Activated CD8-positive, alpha-beta T cell treated with anti-CD3 and anti-CD28 coated beads, Interleukin-2, amount 10 ng/mL, durations not matched to agents 7 days and 5 days (primary cell): ENCODE measurements at regions of chr18 and their contacts with region 1.

Region 1: GRCh38 chr18:10787293-10787901 is 261.6 kb downstream of the NAPG start:
- DNase-seq: peak; percentile 94
- ATAC-seq: peak; percentile 97
- H3K4me3 Mint-ChIP-seq: no peak overlapping the region
- H3K27ac Mint-ChIP-seq: no peak overlapping the region
- H3K4me1 Mint-ChIP-seq: peaks cover 6% of the 10 kb centered on the region
- H3K27me3 Mint-ChIP-seq: peaks cover 39% of the 10 kb centered on the region

Region 2: GRCh38 chr18:10858477-10858876 is 71.1 kb after region 1 on chr18:
- CTCF ChIA-PET with region 1: no interaction called
- POLR2A ChIA-PET with region 1: no interaction called
- DNase-seq: no peak
- ATAC-seq: no peak
- H3K4me3 Mint-ChIP-seq: no peak overlapping the region
- H3K27ac Mint-ChIP-seq: no peak overlapping the region
- H3K4me1 Mint-ChIP-seq: no peaks in the 10 kb centered on the region
- H3K27me3 Mint-ChIP-seq: peaks cover 6% of the 10 kb centered on the region

Region 3: DNA sequence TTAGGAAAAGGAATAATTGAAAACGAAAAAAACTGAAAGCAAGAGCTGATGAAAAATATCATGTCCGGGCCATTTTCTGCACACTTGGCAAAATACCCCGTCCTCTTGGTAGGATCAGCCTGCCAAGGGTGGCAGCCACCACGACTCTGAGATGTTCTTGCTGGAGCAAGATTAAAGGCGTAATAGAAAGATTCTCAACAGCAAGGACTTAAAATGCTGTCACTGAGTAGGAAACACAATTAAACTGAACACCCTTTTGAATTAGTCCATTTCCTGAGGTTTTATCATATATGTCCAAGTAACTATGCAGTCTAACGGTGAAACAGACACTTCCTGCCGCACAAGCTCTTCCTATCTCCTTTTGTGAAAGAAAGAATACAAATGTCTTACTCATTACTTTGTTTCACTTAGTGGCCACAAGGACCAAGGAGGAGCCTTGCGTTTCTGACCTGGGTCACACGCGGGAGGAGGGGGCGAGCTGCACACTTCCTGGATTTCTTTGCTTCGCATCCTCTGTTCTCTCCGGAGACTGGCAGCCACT is 139.3 kb after region 1 on chr18:
- CTCF ChIA-PET with region 1: no interaction called
- POLR2A ChIA-PET with region 1: no interaction called
- DNase-seq: no peak
- ATAC-seq: no peak
- H3K4me3 Mint-ChIP-seq: no peak overlapping the region
- H3K27ac Mint-ChIP-seq: no peak overlapping the region
- H3K4me1 Mint-ChIP-seq: no peaks in the 10 kb centered on the region
- H3K27me3 Mint-ChIP-seq: no peaks in the 10 kb centered on the region

Region 4: DNA sequence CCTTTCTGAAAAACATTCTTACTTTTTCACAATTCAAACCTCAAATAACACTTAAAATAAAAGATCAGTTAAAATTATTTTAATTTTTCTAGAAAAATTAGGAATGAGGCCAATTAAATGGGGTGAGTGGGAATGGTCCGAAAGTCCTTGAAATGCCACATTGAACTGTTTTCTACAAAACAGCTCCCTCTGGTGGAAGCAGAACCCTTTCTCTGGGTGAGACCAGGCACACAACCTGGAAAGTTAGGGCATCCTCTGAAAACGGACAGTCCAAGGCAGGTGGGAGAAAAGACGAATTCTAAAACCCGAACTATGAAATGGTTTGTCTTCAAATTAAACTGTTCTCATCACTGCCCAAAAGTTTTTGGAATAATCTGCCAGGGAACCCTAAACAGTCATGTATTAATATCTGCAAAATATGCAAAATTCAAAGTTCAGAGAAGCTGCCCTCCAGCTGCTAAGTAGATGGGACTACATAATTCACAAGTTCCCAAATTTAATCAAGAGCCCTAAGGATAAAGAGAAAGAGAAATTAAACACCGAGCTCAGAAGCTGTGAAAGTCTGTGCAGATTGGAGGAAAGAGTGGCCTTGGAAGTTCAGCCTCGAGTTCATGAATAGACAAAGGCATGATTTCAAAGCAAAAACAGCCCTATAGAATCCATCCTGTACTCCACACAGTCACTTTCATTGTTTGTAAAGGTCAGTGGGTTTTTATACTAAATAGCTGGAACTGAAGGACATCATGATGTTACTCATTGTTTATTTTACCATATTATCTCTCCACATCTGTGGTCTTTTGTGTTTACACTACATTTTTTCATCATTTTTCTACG is 253.6 kb after region 1 on chr18:
- CTCF ChIA-PET with region 1: interaction called, 12 read pairs
- POLR2A ChIA-PET with region 1: no interaction called
- DNase-seq: peak; percentile 47
- ATAC-seq: no peak
- H3K4me3 Mint-ChIP-seq: no peak overlapping the region
- H3K27ac Mint-ChIP-seq: no peak overlapping the region
- H3K4me1 Mint-ChIP-seq: no peaks in the 10 kb centered on the region
- H3K27me3 Mint-ChIP-seq: peaks cover 2% of the 10 kb centered on the region